ENCODE measurements at regions of chr9 and their contacts with region 1.

Region 1: DNA sequence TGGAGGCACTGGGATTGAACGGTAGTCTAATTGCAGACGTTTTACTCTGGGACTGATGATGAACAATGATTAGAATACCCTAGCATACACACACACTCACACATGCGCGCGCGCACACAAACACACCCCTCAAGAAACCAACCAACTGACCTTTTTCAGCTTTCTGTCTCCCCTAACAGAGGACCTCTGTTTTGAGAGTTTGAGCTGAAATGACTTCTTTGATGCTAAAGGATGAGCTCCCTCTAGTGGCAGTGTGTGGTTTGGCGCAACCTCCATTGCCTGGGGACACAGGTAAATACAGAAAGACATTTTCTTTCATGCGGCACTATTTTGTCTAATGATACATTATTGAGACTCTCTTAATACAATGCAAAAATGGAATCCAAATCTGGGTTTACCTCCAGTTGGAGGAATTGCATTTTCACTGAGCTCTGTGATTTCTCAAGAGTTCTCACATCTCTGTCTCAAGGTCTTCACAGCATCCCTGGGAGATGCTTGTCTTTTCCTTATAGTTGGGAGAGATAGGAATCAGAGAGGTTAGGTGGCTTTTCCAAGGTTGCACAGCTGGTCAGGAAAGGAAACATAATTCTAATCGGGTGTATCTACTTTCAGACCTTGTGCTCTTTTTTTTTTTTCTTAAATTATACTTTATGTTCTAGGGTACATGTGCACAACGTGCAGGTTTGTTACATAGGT is 187.5 kb downstream of the TMEM38B start:
- DNase-seq: peak; percentile 25
- ATAC-seq: peak; percentile 87
- H3K4me3 ChIP-seq: no peak overlapping the region
- H3K27ac ChIP-seq: no peak overlapping the region
- H3K4me1 ChIP-seq: peaks cover 13% of the 10 kb centered on the region
- H3K27me3 ChIP-seq: no peaks in the 10 kb centered on the region
- CTCF ChIP-seq: peak; percentile 79 to 89 (median 87)
- EP300 ChIP-seq: no peak
- POLR2A ChIP-seq: no peak
- RAD21 ChIP-seq: peak; percentile 77

Region 2: DNA sequence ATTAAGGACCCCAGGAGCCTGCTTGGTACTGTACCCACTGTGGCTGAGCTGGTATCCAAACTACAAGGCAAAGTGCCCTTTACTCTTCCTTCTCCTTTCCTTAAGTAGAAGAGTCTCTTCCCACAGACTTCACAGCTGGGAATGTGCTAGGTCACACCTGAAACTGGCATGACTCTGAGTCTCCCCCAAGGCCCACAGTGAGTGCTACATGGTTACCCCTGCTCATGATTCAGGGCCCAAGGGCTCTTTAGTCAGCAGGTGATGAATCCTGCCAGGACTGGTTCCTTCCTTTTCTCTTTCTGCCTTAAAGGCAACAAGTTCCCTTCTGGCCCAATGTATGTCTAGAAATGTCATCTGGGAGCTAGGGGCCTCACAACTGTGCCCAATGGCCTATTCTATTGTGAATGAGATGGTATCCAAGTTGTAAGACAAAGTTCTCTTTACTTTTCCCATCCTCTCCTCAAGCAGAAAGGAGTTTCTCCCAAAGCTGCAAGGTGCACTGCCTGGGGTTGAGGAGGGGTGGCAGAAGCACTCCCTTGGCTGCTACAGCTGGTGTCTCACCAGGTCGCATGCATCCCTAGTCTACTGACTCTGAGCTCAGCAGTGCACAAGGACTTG is 53.1 kb before region 1 on chr9:
- CTCF ChIA-PET with region 1: interaction called, 11 read pairs
- POLR2A ChIA-PET with region 1: no interaction called
- RAD21 ChIA-PET with region 1: no interaction called
- SMC1A ChIA-PET with region 1: no interaction called
- in situ Hi-C with region 1: no loop called
- intact Hi-C with region 1: no loop called
- DNase-seq: no peak
- ATAC-seq: no peak
- H3K4me3 ChIP-seq: no peak overlapping the region
- H3K27ac ChIP-seq: no peak overlapping the region
- H3K4me1 ChIP-seq: no peaks in the 10 kb centered on the region
- H3K27me3 ChIP-seq: no peaks in the 10 kb centered on the region
- CTCF ChIP-seq: no peak
- EP300 ChIP-seq: no peak
- POLR2A ChIP-seq: no peak
- RAD21 ChIP-seq: no peak

Region 3: DNA sequence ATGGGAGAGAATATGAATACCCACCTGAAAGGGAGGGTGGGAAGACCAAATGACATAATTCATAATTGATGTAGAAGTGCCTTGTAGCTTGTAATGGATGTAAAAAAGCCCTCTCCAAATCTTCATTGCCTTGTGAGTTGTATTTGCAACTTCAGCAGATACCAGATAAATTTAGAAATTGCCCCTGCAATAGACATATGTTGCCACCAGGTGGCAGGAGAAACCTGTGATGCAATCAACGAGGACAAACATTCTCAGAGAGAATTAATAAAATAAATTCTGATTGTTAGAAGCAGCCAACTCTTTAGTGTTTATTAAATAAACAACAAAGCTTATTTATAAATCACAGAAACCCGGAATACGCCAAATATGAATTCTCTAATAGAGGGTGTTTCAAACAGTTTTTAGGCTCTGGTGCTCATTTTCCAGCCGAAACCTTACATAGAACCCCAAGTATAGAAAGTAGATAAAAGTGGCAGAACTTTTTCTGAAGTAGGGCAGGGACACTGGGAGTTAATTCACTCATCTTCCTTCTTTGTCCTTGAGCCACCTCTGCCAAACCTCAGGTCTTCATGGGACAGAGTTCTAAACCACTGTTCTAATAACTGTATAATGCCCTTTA is 39.7 kb before region 1 on chr9:
- CTCF ChIA-PET with region 1: interaction called, 204 read pairs
- POLR2A ChIA-PET with region 1: no interaction called
- RAD21 ChIA-PET with region 1: interaction called, 35 read pairs
- SMC1A ChIA-PET with region 1: interaction called, 68 read pairs
- in situ Hi-C with region 1: no loop called
- intact Hi-C with region 1: loop called (anchors 1 kb)
- DNase-seq: peak; percentile 3
- ATAC-seq: 0 out of 3 replicates have a peak, but pooled peaks have one; percentile 36
- H3K4me3 ChIP-seq: no peak overlapping the region
- H3K27ac ChIP-seq: no peak overlapping the region
- H3K4me1 ChIP-seq: no peaks in the 10 kb centered on the region
- H3K27me3 ChIP-seq: no peaks in the 10 kb centered on the region
- CTCF ChIP-seq: peak; percentile 73 to 81 (median 73)
- EP300 ChIP-seq: no peak
- POLR2A ChIP-seq: no peak
- RAD21 ChIP-seq: peak; percentile 86

Region 4: GRCh38 chr9:105858006-105858690 is 23.7 kb before region 1 on chr9:
- CTCF ChIA-PET with region 1: interaction called, 15 read pairs
- POLR2A ChIA-PET with region 1: no interaction called
- RAD21 ChIA-PET with region 1: no interaction called
- SMC1A ChIA-PET with region 1: interaction called, 4 read pairs
- in situ Hi-C with region 1: no loop called
- intact Hi-C with region 1: no loop called
- DNase-seq: no peak
- ATAC-seq: peak; percentile 55
- H3K4me3 ChIP-seq: no peak overlapping the region
- H3K27ac ChIP-seq: no peak overlapping the region
- H3K4me1 ChIP-seq: no peaks in the 10 kb centered on the region
- H3K27me3 ChIP-seq: no peaks in the 10 kb centered on the region
- CTCF ChIP-seq: no peak
- EP300 ChIP-seq: no peak
- POLR2A ChIP-seq: no peak
- RAD21 ChIP-seq: no peak

Region 5: GRCh38 chr9:105864248-105864898 is 17.4 kb before region 1 on chr9:
- CTCF ChIA-PET with region 1: interaction called, 10 read pairs
- POLR2A ChIA-PET with region 1: no interaction called
- RAD21 ChIA-PET with region 1: interaction called, 3 read pairs
- SMC1A ChIA-PET with region 1: interaction called, 4 read pairs
- in situ Hi-C with region 1: no loop called
- intact Hi-C with region 1: no loop called
- DNase-seq: no peak
- ATAC-seq: no peak
- H3K4me3 ChIP-seq: no peak overlapping the region
- H3K27ac ChIP-seq: no peak overlapping the region
- H3K4me1 ChIP-seq: no peaks in the 10 kb centered on the region
- H3K27me3 ChIP-seq: no peaks in the 10 kb centered on the region
- CTCF ChIP-seq: no peak
- EP300 ChIP-seq: no peak
- POLR2A ChIP-seq: no peak
- RAD21 ChIP-seq: no peak

Region 6: DNA sequence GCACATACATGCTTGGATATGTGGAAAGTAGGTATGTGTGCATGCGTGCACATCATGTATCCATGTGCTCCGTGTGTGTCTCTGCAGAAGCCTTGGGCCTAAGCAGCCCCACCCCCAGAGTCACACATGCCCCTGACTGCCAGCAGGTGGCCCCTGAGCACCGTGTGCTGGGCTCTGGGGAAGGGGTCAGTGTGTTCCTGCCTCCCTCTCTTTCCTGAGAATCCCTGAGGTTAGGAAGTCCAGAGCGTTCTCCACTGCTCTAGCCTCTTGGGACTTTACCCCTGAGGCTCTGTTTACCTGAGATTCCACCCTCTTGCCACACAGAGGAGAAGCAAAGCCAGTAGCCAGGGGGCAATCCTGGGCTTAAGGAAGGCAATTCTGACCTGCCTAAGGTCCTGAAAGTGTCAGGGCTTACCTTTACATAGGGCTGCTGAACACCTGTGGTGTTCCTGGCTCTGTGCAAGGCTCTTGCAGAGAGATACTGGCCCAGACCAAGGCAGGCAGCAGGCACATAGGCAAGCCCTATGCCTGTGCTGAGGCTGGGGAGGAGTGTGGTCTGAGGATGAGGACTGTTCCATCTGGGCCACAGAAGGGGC is 19.8 kb after region 1 on chr9:
- CTCF ChIA-PET with region 1: interaction called, 18 read pairs
- POLR2A ChIA-PET with region 1: interaction called, 6 read pairs
- RAD21 ChIA-PET with region 1: interaction called, 3 read pairs
- SMC1A ChIA-PET with region 1: interaction called, 7 read pairs
- in situ Hi-C with region 1: no loop called
- intact Hi-C with region 1: no loop called
- DNase-seq: no peak
- ATAC-seq: peak; percentile 99
- H3K4me3 ChIP-seq: no peak overlapping the region
- H3K27ac ChIP-seq: no peak overlapping the region
- H3K4me1 ChIP-seq: no peaks in the 10 kb centered on the region
- H3K27me3 ChIP-seq: no peaks in the 10 kb centered on the region; a peak in 1 of 4 replicates
- CTCF ChIP-seq: peak; percentile 67 to 80 (median 67)
- EP300 ChIP-seq: no peak
- POLR2A ChIP-seq: no peak
- RAD21 ChIP-seq: peak; percentile 67

Region 7: DNA sequence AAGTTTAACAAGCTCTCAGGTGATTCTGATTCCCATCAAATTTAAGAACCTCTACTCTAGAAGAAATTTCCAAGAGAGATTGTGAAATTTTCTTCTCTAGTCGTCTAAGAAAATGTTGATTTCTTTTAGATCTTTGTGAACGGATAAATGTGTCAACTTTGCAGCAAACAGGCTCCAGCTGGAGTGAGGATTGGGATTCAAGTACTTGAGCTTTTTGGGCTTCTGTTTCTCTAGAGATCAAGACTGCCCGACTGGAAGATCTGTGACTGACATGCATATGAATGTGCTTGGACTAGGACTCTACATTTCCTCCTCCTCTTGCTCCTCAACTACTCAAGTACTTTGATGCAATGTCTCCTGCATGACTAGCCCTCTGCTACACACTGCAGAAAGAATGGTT is 200.8 kb after region 1 on chr9:
- CTCF ChIA-PET with region 1: no interaction called
- POLR2A ChIA-PET with region 1: no interaction called
- RAD21 ChIA-PET with region 1: no interaction called
- SMC1A ChIA-PET with region 1: no interaction called
- in situ Hi-C with region 1: no loop called
- intact Hi-C with region 1: no loop called
- DNase-seq: no peak
- ATAC-seq: no peak
- H3K4me3 ChIP-seq: no peak overlapping the region
- H3K27ac ChIP-seq: no peak overlapping the region
- H3K4me1 ChIP-seq: no peaks in the 10 kb centered on the region
- H3K27me3 ChIP-seq: no peaks in the 10 kb centered on the region; a peak in 1 of 4 replicates
- CTCF ChIP-seq: no peak
- EP300 ChIP-seq: no peak
- POLR2A ChIP-seq: no peak
- RAD21 ChIP-seq: no peak

Measured in GM12878 (cell line).